ENCODE measurements at regions of chr17 and their contacts with region 1.

Region 1: GRCh38 chr17:4004517-4005295 is 40.5 kb upstream of the ATP2A3 start:
- DNase-seq: peak; percentile 63
- ATAC-seq: peak; percentile 40 to 54

Region 2: DNA sequence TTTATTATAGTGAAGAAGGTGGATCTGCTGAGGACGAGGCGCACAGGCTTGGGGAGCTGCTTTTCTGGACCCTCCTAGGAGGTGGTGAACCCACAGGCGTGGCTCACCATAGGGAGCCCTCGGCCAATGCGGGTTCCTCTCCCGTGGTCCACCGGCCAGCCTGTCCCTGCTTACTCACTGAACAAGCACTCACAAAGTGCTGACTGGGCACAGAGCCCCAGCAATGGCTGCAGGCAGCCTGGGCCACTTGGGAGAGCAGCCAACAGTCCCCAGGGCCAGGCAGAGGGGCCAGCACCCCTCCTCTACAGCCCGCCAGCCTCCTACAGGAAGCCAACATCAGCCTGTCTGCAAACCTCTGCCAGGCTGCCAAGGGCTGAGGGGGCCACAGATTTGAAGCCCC is 139.5 kb before region 1 on chr17:
- intact Hi-C with region 1: loop called in 1 of 2 experiments (anchors 10 kb)
- DNase-seq: peak; percentile 65
- ATAC-seq: peak in 1 of 2 donors; percentile 56

Region 3: DNA sequence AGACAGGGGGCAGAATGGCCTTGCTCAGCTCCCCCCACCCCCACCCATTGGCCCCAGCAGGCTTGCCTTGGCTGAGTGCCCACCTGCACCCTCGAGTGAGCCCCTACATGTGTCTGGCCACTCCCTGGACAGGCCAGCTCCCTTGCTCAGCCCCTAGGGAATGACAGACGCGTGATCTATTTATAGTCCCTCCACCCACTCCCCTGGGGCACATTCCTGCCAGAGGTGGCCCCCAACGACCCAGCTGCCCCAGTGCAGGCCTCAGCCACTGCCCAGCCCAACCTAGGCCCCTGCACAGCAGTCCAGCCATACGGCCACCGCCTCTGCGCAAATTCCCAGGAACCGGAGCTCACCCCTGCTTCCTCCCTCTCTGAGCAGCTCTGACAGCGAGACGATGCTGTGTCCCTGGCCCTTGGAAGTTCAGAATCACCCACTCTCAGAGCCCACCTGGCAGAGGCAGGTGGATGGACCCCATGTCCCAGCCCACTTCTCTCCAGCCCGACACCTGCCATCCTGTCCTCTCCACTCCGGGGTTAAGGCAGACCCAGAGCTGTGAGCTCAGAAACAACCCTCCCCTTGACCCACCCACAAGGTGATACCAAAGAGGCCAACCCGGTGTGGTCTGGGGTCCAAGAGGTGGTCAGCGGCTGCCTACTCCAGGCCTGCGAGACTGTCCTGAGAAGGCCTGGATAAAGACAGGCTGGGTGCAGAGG is 76.9 kb before region 1 on chr17:
- intact Hi-C with region 1: loop called in 1 of 2 experiments (anchors 5 kb)
- DNase-seq: no peak
- ATAC-seq: peak; percentile 34 to 69

Region 4: DNA sequence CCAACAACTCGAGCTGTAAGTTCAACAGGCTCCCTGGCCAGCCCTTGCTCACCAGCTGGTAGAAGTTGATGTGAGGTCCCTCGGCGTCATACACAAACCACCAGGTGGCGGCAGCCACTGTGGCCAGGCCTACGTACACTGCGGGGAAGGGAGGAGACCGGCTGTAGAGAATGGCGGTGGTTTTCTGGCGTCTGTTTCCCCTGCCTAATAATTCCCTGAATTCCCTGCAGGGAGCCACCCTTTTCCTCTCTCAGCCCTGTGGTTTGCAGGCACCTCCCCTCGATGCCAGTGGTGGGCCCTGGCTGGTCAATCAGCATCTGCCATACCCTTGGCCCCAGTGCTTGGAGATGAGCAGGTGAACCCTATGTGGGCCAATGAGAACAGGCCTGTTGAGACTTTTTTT is 69.6 kb before region 1 on chr17:
- intact Hi-C with region 1: loop called (anchors 1 to 5 kb)
- DNase-seq: peak; percentile 74
- ATAC-seq: peak; percentile 92 to 93

Measured in left cardiac atrium (tissue), 4 donors.